ENCODE measurements at regions of chr20 and their contacts with region 1.

Region 1: GRCh38 chr20:4071178-4071693 is 55.9 kb upstream of the RNF24 start:
- DNase-seq: no peak
- H3K4me3 ChIP-seq: no peak overlapping the region
- H3K27me3 ChIP-seq: no peaks in the 10 kb centered on the region
- CTCF ChIP-seq: no peak

Region 2: GRCh38 chr20:3927486-3928291 is 143.5 kb before region 1 on chr20:
- CTCF ChIA-PET with region 1: interaction called, 10 read pairs
- POLR2A ChIA-PET with region 1: no interaction called
- DNase-seq: no peak
- H3K4me3 ChIP-seq: no peak overlapping the region
- H3K27me3 ChIP-seq: no peaks in the 10 kb centered on the region
- CTCF ChIP-seq: no peak

Region 3: DNA sequence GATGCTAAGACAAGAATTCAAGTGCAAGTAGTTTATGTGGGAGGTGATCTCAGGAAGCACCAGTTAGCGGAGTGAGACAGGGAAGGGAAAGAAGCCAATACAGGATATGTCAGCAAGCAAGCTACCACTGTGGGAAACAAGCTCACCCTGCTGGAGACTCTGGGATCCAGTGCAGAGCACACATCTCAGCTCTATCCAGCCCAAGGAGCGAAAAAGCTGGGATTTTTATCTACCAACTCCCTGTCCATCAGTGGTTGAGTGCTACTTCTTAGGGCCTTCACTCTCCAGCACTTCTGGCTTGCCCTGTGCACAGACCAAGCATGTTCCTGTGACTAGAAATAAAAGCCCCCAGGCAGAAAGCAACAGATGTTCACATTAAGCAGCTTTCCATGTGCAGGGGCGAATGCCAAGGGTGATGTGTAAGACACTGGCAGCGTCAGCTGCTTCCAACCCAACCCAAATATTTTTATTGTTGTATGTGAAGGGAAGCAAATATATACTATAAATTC is 45.1 kb before region 1 on chr20:
- CTCF ChIA-PET with region 1: interaction called, 12 read pairs
- POLR2A ChIA-PET with region 1: no interaction called
- DNase-seq: peak; percentile 52
- H3K4me3 ChIP-seq: no peak overlapping the region
- H3K27me3 ChIP-seq: peaks cover 2% of the 10 kb centered on the region; the same call in 1 of the 2 replicates
- CTCF ChIP-seq: peak; percentile 60

Region 4: GRCh38 chr20:4366076-4366475 is 294.8 kb after region 1 on chr20:
- CTCF ChIA-PET with region 1: no interaction called
- POLR2A ChIA-PET with region 1: no interaction called
- DNase-seq: no peak
- H3K4me3 ChIP-seq: no peak overlapping the region
- H3K27me3 ChIP-seq: no peaks in the 10 kb centered on the region
- CTCF ChIP-seq: no peak